Vagina (tissue), 2 donors: ENCODE measurements at regions of chr4 and their contacts with region 1.

Region 1: DNA sequence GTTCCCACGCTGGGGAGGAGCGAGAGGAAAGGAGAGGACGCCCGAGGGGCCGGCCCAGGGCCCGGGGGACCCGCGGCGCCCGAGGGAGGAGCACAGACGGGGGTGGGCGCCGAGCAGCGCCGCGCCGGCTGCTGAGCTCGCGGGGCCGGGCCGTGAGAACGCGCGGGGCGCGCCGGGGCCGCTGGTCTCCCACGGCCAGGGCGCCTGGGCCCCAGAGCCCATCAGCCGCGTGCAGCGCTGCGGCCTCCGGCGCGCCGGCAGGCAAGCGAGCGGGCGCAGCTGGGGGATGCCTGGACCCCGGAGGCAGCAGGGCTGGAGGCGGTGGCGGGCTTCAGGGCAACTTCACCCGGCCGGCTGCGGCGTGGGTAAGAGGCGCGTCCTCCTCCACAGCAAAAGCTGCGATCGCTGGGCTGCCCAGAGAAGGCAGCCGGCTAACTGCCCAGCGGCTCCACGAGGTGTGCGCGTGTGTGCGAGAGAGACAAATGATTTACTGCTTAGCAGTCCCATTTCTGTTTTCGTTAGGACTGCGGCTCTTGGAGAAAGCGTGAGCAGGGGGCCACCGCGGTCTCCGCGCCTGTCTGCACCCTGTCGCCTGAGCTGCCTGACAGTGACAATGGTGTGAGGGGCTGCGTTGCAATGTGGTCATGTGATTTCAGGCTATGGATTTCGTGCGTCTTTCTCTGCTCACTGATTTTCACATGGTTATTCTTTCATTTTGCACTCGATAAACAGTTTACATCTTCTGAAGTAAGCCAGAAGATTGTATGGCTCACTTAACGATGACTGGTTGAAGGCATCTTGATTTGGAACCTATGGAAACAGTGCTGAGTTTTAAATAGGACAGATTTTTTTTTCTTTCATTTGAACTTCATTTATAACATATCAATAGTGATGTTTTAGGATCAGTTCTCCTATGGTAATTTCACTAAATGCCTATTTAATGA is 1.2 kb downstream of the GUCY1A1 start:
- DNase-seq: no peak
- H3K4me3 ChIP-seq: peak overlapping the region; percentile 63 to 82
- H3K27ac ChIP-seq: peak overlapping the region; percentile 94
- H3K4me1 ChIP-seq: peaks cover 6% of the 10 kb centered on the region
- H3K27me3 ChIP-seq: no peaks in the 10 kb centered on the region
- CTCF ChIP-seq: no peak
- POLR2A ChIP-seq: no peak

Region 2: DNA sequence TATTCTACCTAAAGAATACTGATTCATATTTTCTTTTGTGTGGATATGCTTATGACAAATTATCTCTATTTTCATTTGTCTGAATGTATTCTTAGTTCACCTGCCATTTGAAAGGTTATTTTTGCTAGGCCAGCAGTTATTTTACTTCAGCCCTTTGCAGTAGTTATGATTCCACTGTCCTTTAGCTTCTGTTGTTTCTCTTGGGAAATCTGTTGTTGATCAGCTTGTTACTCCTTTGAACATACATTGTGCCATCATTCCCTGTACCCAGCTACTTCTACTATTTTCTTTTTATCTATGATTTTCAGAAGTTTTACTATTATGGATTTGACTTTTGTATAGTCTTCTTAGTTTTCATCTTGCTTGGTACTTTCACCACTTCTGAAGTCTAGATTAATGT is 849.6 kb before region 1 on chr4:
- intact Hi-C with region 1: no loop called
- DNase-seq: no peak
- H3K4me3 ChIP-seq: no peak overlapping the region
- H3K27ac ChIP-seq: no peak overlapping the region
- H3K4me1 ChIP-seq: no peaks in the 10 kb centered on the region
- H3K27me3 ChIP-seq: no peaks in the 10 kb centered on the region
- CTCF ChIP-seq: no peak
- POLR2A ChIP-seq: no peak

Region 3: GRCh38 chr4:155604718-155605626 is 62.9 kb before region 1 on chr4:
- intact Hi-C with region 1: loop called (anchors 10 kb)
- DNase-seq: no peak
- H3K4me3 ChIP-seq: no peak overlapping the region
- H3K27ac ChIP-seq: no peak overlapping the region
- H3K4me1 ChIP-seq: no peaks in the 10 kb centered on the region
- H3K27me3 ChIP-seq: no peaks in the 10 kb centered on the region
- CTCF ChIP-seq: no peak
- POLR2A ChIP-seq: no peak

Region 4: DNA sequence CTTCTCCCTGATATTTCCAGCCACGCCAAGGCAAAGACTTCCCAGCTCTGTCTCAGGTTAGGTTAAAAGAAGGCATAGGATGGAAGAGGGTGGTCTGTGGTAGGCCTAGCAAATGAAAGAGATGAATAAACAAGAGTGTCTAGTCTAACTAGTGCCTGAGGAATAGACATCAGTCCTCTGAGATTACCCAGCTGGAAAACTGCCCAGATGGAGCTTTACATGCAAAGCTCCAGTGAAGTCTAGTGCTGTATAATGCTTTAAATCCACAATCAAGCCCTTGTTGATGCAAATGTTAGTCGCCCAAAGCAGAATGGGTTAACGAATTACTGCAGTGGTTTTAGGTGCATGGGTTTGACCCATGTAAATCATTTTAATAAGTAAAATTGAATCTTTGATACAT is 66.2 kb after region 1 on chr4:
- intact Hi-C with region 1: no loop called
- DNase-seq: no peak
- H3K4me3 ChIP-seq: no peak overlapping the region
- H3K27ac ChIP-seq: no peak overlapping the region
- H3K4me1 ChIP-seq: no peaks in the 10 kb centered on the region
- H3K27me3 ChIP-seq: no peaks in the 10 kb centered on the region
- CTCF ChIP-seq: no peak
- POLR2A ChIP-seq: no peak

Region 5: GRCh38 chr4:155777971-155778735 is 110.3 kb after region 1 on chr4:
- intact Hi-C with region 1: loop called (anchors 10 kb)
- DNase-seq: no peak
- H3K4me3 ChIP-seq: no peak overlapping the region
- H3K27ac ChIP-seq: peak overlapping the region; percentile 31
- H3K4me1 ChIP-seq: peaks cover 8% of the 10 kb centered on the region
- H3K27me3 ChIP-seq: no peaks in the 10 kb centered on the region
- CTCF ChIP-seq: no peak
- POLR2A ChIP-seq: no peak